PC-9 (cell line): ENCODE measurements at regions of chr14 and their contacts with region 1.

Region 1: GRCh38 chr14:70809543-70810244 is 381 bp upstream of the MAP3K9 start:
- DNase-seq: peak; percentile 97 to 100
- H3K4me3 ChIP-seq: peak overlapping the region; percentile 75
- H3K27ac ChIP-seq: peak overlapping the region; percentile 2; the same call in 1 of the 2 replicates
- H3K4me1 ChIP-seq: peaks cover 38% of the 10 kb centered on the region
- H3K27me3 ChIP-seq: no peaks in the 10 kb centered on the region
- CTCF ChIP-seq: no peak

Region 2: GRCh38 chr14:70359181-70360090 is 450.3 kb before region 1 on chr14 and contains the start of gene COX16:
- CTCF ChIA-PET with region 1: no interaction called
- POLR2A ChIA-PET with region 1: no interaction called
- intact Hi-C with region 1: loop called (anchors 5 kb)
- DNase-seq: peak; percentile 79 to 94
- H3K4me3 ChIP-seq: peak within 1 kb of the TSS; percentile 80
- H3K27ac ChIP-seq: peak within 1 kb of the TSS; percentile 69
- H3K4me1 ChIP-seq: peaks cover 15% of the 10 kb centered on the region; the same call in 1 of the 2 replicates
- H3K27me3 ChIP-seq: no peaks in the 10 kb centered on the region
- CTCF ChIP-seq: no peak
- total RNA-seq, gene COX16: 73.9 and 87.0 TPM in 2 replicates

Region 3: DNA sequence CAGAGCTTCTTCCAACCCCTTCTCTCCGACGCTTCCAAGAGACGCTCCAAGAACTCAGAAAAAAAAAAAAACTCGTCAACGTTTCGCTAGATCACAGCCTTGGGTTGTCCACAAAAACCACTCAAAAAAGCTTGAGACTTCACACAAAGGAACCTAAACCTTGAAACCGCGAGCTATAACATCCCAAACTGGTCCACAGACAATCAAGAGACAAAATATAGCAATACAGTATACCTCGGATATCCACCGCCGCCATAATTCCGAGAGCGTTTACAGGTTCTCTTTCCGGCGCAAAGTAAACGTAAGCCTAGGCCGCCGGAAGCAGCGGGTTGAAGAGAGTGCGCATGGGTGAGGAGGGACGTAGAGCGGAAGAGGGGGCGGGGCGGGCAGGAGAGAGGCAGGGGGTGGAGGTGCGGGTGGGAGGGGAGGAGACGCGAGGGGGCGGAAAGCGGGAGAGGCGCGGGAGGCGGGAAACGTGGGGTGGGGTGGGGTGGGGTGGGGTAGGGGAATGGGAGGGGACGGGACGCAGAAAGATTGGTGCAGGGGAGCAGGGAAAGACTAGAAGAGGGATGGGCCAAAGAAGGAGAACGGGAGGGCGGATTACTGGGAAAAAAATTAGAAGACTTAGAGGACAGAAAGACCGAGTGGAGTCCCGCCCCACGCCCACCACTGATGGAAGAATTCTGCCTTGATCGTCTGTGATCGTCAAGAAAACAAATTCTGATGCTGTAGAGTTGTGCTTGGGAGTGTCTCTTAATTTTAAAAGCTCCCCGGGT is 209.1 kb before region 1 on chr14 and contains the start of gene MED6:
- CTCF ChIA-PET with region 1: interaction called, 5 read pairs
- POLR2A ChIA-PET with region 1: interaction called, 6 read pairs
- intact Hi-C with region 1: loop called (anchors 1 kb)
- DNase-seq: peak; percentile 86 to 91
- H3K4me3 ChIP-seq: peak within 1 kb of the TSS; percentile 68
- H3K27ac ChIP-seq: peak within 1 kb of the TSS; percentile 58
- H3K4me1 ChIP-seq: peaks cover 19% of the 10 kb centered on the region
- H3K27me3 ChIP-seq: no peaks in the 10 kb centered on the region
- CTCF ChIP-seq: no peak
- total RNA-seq, gene MED6: 46.5 and 58.2 TPM in 2 replicates

Region 4: GRCh38 chr14:70640938-70641547 is 168.7 kb before region 1 on chr14:
- CTCF ChIA-PET with region 1: no interaction called
- POLR2A ChIA-PET with region 1: interaction called, 6 read pairs
- intact Hi-C with region 1: loop called (anchors 2 kb)
- DNase-seq: peak; percentile 47 to 77
- H3K4me3 ChIP-seq: peak overlapping the region; percentile 97
- H3K27ac ChIP-seq: 0 out of 2 replicates have a peak overlapping the region, but pooled peaks have one; percentile 1
- H3K4me1 ChIP-seq: peaks cover 32% of the 10 kb centered on the region
- H3K27me3 ChIP-seq: no peaks in the 10 kb centered on the region
- CTCF ChIP-seq: no peak

Region 5: GRCh38 chr14:70707138-70708038 is 102.3 kb before region 1 on chr14:
- CTCF ChIA-PET with region 1: no interaction called
- POLR2A ChIA-PET with region 1: interaction called, 11 read pairs
- intact Hi-C with region 1: no loop called
- DNase-seq: peak; percentile 81 to 92
- H3K4me3 ChIP-seq: no peak overlapping the region
- H3K27ac ChIP-seq: peak overlapping the region; percentile 67
- H3K4me1 ChIP-seq: peaks cover 22% of the 10 kb centered on the region
- H3K27me3 ChIP-seq: no peaks in the 10 kb centered on the region
- CTCF ChIP-seq: no peak

Region 6: GRCh38 chr14:70754989-70755388 is 54.7 kb before region 1 on chr14:
- CTCF ChIA-PET with region 1: interaction called, 3 read pairs
- POLR2A ChIA-PET with region 1: interaction called, 17 read pairs
- intact Hi-C with region 1: loop called (anchors 1 kb)
- DNase-seq: peak; percentile 96 to 99
- H3K4me3 ChIP-seq: no peak overlapping the region
- H3K27ac ChIP-seq: peak overlapping the region; percentile 87
- H3K4me1 ChIP-seq: peaks cover 36% of the 10 kb centered on the region
- H3K27me3 ChIP-seq: no peaks in the 10 kb centered on the region
- CTCF ChIP-seq: no peak

Region 7: GRCh38 chr14:71011479-71011878 is 201.8 kb after region 1 on chr14:
- CTCF ChIA-PET with region 1: no interaction called
- POLR2A ChIA-PET with region 1: no interaction called
- intact Hi-C with region 1: no loop called
- DNase-seq: no peak
- H3K4me3 ChIP-seq: no peak overlapping the region
- H3K27ac ChIP-seq: no peak overlapping the region
- H3K4me1 ChIP-seq: no peaks in the 10 kb centered on the region
- H3K27me3 ChIP-seq: no peaks in the 10 kb centered on the region
- CTCF ChIP-seq: peak; percentile 56

Region 8: DNA sequence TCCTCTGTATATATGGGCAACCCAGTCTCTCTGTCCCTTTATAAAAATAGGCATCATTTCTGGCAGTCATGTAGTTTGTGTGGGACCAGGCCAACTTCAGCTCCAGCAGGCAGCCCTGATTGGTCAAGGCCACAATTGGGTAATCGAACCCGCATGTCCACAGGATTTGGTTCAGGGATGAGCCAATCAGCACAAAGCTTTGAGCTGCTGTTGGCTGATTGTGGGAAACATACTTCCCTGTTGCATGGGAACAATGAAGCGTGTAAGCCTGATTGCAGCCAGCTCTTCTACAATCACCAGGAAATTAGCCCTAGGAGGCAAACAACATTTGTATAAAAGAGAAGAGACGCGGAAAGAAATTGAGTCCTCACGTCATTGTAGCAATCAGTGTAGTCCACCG is 426.2 kb after region 1 on chr14:
- CTCF ChIA-PET with region 1: interaction called, 10 read pairs
- POLR2A ChIA-PET with region 1: no interaction called
- intact Hi-C with region 1: no loop called
- DNase-seq: no peak
- H3K4me3 ChIP-seq: no peak overlapping the region
- H3K27ac ChIP-seq: no peak overlapping the region
- H3K4me1 ChIP-seq: 0 out of 2 replicates have a peak, but pooled peaks cover 5% of the 10 kb centered on the region
- H3K27me3 ChIP-seq: no peaks in the 10 kb centered on the region
- CTCF ChIP-seq: no peak